Left colon (tissue), 2 donors: ENCODE measurements at regions of chr19 and their contacts with region 1.

Region 1: GRCh38 chr19:16382775-16383543 is 58.3 kb downstream of the KLF2 start:
- DNase-seq: peak; percentile 72 to 88
- ATAC-seq: peak; percentile 86

Region 2: GRCh38 chr19:16247353-16248182 is 135.4 kb before region 1 on chr19:
- intact Hi-C with region 1: loop called (anchors 2 to 10 kb)
- DNase-seq: peak; percentile 71 to 88
- ATAC-seq: peak; percentile 97

Region 3: DNA sequence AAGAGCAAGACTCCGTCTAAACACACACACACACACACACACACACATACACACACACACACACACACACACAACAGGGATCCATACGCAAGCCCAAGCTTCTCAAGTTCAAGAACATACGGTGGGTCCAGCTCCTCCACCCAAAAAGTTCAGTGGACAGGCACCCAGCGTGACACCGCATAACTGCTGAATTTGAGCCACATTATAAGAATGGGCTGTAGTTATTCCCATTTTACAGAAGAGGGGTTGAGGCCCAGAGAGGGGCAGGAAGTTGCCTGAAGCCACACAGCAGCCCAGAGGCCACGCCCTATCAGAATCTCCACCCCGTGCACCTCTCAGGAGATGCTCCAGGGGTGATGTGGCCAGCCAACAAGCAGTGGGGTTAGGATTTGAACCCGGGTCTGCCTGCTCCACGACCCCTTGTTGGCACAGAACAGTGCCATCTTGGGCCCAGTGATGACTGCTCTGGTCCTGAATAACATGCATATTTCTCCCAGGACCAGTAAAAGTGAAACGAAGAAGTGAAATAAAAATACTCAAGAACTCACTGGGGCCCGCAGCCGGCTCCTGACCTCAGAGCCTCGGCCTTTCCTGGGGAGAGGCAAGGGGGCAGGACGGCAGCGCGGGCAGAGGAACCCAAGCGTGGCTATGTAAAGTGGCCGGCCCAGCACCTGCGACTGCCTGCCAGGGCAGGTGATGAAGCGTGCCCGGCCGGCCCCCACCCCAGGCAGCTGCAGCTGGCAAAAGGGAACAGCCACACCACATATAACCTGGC is 123.4 kb before region 1 on chr19:
- intact Hi-C with region 1: loop called in 1 of 2 experiments (anchors 10 kb)
- DNase-seq: peak; percentile 39 to 56
- ATAC-seq: peak; percentile 22

Region 4: GRCh38 chr19:16324384-16325160 is 58.4 kb before region 1 on chr19 and contains the start of gene KLF2:
- intact Hi-C with region 1: loop called in 1 of 2 experiments (anchors 10 kb)
- DNase-seq: peak; percentile 87 to 90
- ATAC-seq: peak; percentile 87
- total RNA-seq, gene KLF2: 28.2 to 29.4 TPM